B cell (primary cell): ENCODE measurements at regions of chr22 and their contacts with region 1.

Region 1: DNA sequence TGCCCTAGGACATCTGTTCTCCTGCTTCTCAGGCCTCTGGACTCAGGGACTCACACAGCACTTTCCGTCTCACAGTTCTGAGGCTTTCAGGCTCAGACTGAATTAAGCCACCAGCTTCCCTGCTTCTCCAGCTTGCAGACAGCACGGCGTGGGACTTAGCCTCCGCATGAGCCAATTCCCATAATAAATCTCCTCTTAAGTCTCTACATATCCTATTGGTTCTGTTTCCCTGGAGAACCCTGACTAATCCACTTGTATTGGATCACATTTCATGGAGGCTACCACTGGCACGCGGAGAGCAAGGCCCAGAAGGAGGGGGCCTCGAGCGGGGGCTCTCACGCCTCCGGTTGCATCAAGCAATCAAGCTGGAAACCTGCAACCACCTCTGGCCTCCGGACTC is 1313.6 kb downstream of the TBC1D22A start:
- DNase-seq: no peak
- ATAC-seq: no peak
- H3K4me3 ChIP-seq: no peak overlapping the region
- H3K4me3 Mint-ChIP-seq: no peak overlapping the region
- H3K27ac ChIP-seq: no peak overlapping the region
- H3K27ac Mint-ChIP-seq: no peak overlapping the region
- H3K4me1 ChIP-seq: peaks cover 9 to 17% of the 10 kb centered on the region in 2 donors
- H3K4me1 Mint-ChIP-seq: peaks cover 25% of the 10 kb centered on the region
- H3K27me3 ChIP-seq: no peaks in the 10 kb centered on the region
- H3K27me3 Mint-ChIP-seq: no peaks in the 10 kb centered on the region
- CTCF ChIP-seq: no peak

Region 2: DNA sequence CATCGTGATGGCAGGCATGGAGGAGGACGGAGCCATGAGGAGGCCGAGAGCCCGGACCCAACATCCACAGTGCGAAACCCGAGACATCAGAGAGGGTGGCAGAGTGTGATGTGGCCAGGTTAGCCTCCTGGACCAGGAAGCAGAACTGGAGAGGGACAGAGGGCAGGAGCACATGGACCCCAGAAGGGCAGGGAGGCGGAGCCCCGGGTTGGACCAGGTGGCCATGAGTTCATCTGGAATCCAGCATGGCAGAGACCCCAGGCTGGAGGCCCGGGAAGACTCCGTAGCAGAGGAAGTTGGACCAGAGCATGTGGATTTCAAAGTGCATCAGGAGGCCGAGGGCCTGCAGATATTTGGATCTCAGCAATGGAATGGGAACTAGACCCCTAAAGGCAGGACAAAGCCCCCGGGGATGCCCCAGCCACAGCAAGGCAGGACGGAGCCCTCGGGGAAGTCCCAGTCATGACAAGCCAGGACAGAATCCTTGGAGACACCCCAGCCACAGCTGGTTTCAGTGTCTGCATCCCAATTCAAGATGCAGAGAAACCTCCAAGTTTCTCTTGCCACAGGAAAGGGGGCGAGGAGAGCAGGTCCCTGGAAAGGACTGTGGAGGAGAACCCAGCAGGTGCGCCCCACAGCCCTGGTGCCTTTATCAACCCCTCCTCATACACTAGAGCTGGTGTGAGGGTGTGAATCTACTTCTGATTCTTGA is 358.3 kb after region 1 on chr22:
- CTCF ChIA-PET with region 1: no interaction called
- POLR2A ChIA-PET with region 1: interaction called, 12 read pairs
- intact Hi-C with region 1: no loop called
- DNase-seq: no peak
- ATAC-seq: no peak
- H3K4me3 ChIP-seq: no peak overlapping the region
- H3K4me3 Mint-ChIP-seq: no peak overlapping the region
- H3K27ac ChIP-seq: no peak overlapping the region
- H3K27ac Mint-ChIP-seq: no peak overlapping the region
- H3K4me1 ChIP-seq: no peaks in the 10 kb centered on the region
- H3K4me1 Mint-ChIP-seq: no peaks in the 10 kb centered on the region
- H3K27me3 ChIP-seq: peaks cover 0 to 16% (median 0%) of the 10 kb centered on the region in 4 experiments
- H3K27me3 Mint-ChIP-seq: peaks cover 42% of the 10 kb centered on the region
- CTCF ChIP-seq: no peak